RWPE1 (cell line): ENCODE measurements at regions of chr6 and their contacts with region 1.

Region 1: GRCh38 chr6:2209226-2209809 is 36.1 kb downstream of the GMDS start:
- DNase-seq: peak; percentile 41
- H3K27ac ChIP-seq: no peak overlapping the region
- CTCF ChIP-seq: peak; percentile 46

Region 2: DNA sequence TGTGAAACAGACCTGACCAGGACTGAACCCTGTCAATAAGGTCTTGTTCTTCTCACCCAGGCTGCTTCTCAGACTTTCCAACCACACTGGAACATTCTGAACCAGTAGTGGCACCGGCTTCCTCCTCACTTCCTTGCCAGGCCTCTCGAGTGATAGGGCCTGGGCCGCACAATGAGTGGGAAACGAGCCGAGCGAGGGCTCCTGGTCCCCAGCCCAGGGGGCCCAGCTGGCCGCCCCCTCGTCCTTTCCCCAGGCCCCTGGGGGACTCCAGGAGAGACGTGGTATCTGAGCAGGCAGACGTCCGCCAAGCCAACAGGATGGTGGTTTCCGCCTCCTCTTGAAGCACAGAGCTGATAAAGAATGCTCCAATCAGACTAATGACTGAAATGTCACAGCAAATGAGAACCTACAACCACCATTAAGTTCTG is 81.8 kb before region 1 on chr6:
- CTCF ChIA-PET with region 1: no interaction called
- POLR2A ChIA-PET with region 1: no interaction called
- DNase-seq: no peak
- H3K27ac ChIP-seq: no peak overlapping the region
- CTCF ChIP-seq: no peak

Region 3: DNA sequence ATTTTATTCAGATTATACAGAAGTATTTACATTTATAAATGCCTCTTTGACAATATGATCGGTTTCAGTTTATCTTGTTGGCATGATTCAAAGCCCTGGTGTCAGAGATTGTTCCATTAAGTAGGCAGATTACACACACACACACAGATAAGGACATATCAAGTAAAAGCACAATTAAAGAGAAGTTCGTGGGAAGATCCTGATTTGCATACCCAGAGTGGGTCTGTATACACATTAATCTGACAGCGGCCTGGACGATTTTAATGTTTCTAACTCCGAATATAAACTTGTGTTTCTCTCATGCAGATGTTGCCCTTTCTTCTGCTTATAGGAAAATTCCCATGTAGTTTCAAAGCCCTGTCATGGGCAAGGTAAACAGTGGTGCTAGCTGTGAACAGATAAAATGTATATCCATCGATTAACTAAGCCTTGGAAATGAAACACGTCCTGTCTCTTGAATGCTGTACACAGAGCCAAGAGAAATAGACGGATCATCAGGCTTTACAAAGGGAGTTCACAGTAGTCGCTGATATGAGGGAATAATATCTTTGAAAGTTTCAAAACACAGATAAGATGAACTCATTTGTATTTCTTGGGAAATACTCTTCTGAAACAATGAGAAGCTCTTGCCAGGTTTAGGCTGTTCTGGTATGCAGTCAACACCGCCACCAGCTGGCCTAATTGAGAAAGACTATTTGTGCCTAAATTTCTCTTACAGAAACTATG is 144.3 kb after region 1 on chr6:
- CTCF ChIA-PET with region 1: interaction called, 12 read pairs
- POLR2A ChIA-PET with region 1: no interaction called
- DNase-seq: peak; percentile 61
- H3K27ac ChIP-seq: no peak overlapping the region
- CTCF ChIP-seq: peak; percentile 81